SK-N-SH (cell line): ENCODE measurements at regions of chr19 and their contacts with region 1.

Region 1: DNA sequence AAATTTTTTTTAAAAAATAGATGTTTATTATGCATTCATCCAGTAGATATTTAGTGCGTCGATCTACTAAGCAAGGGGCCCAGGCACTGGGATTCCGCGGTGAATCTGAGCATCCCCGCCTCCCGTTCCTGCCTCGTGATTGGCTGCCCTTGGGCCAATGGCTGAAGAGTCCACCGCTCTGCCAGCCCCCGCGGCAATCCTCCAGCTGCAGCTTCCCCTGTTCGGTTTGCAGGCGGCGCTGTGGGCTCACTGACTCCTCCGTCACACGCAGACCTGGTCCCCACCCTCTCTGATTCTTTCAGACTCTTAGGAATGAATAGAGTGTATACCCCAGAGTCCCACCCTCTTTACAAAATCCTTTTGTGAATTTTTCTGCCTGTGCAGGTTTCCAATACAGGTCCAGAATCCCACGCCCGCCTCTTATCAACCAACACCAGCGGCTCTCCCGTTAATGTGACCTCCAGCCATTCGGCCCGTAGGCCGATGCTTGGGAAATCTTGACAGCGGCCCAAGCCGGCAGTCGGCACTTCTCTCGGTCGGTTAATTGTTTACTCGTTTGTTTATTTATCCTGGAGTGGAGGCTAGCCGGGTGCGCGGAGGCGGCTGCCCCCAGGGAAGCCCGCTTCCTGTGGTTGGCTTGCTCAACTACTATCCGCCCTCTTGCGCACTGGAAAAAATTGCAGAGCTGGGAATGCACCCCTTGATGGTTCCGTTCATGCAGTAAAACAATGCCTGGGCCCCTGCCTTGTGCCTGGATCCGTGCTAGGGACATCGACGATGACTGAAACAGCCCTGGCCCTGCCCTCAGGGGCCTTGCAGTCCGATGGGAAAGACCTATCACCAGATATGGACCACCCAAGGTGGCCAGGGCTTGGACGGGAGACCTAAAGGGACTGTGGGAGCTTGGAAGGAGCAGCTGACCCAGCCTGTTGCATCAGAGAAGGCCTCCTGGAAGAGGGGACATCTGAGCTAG is 4.5 kb upstream of the ARHGAP35 start:
- DNase-seq: peak; percentile 88
- H3K4me3 ChIP-seq: peak overlapping the region in 1 of 2 experiments; percentile 31; a peak in 2 of 4 replicates
- H3K27ac ChIP-seq: peak overlapping the region; percentile 4 to 21; a peak in 2 of 4 replicates
- H3K4me1 ChIP-seq: peaks cover 0 to 5% of the 10 kb centered on the region in 2 experiments; a peak in 2 of 4 replicates
- H3K27me3 ChIP-seq: no peaks in the 10 kb centered on the region
- CTCF ChIP-seq: peak; percentile 85
- EP300 ChIP-seq: no peak
- RAD21 ChIP-seq: peak; percentile 93

Region 2: DNA sequence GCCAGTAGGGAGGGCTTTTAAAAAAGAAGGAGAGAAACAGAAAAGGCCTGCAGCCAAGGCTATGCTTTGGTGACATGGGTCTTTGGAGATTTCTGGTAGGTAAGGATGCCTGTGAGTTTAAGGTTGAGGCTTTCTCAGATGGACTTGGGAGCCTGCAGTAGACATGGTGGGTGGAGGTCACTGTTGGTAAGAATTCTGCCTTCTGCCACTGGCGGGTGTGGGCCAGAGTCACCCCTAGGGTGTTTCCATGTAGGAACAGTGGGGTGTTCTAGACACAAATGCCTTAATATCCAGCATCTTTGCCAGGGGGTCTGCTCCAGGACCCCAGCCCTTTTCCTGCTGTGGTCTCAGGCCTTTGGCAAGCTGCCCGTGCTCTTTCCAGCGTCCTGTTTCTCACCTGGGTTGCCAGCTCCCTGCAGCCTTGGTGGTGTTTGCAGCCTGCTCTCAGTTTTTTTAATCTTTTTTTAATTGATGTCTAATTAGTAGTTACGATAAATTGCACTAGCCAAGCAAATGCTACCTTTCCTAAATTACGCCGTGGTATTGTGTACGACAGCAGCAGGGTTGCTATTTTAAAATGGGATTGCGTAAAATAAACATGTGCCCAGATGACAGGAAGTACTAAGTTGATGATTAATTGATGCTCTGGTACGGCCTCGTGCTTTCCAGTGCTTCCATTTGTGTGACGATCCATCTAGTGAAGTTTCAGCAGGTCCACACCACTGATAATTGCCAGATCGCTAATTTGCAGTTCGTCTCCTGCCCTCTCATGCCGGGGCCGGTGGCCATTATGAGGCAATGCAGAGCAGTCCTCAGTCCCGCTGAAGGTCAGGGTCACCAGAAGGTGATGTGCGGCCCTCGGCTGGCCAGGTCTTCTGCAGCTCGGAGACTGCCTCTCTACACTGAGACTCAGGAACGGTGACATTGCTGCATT is 128.0 kb after region 1 on chr19:
- CTCF ChIA-PET with region 1: interaction called, 126 read pairs
- POLR2A ChIA-PET with region 1: no interaction called
- DNase-seq: peak; percentile 74
- H3K4me3 ChIP-seq: no peak overlapping the region
- H3K27ac ChIP-seq: peak overlapping the region in 1 of 2 experiments; percentile 80; a peak in 2 of 4 replicates
- H3K4me1 ChIP-seq: peaks cover 22 to 29% of the 10 kb centered on the region in 2 experiments
- H3K27me3 ChIP-seq: no peaks in the 10 kb centered on the region
- CTCF ChIP-seq: no peak
- EP300 ChIP-seq: peak in 1 of 2 experiments; percentile 51; a peak in 1 of 4 replicates
- RAD21 ChIP-seq: peak; percentile 14; the same call in 1 of the 2 replicates